ENCODE measurements at regions of chr1 and their contacts with region 1.

Region 1: DNA sequence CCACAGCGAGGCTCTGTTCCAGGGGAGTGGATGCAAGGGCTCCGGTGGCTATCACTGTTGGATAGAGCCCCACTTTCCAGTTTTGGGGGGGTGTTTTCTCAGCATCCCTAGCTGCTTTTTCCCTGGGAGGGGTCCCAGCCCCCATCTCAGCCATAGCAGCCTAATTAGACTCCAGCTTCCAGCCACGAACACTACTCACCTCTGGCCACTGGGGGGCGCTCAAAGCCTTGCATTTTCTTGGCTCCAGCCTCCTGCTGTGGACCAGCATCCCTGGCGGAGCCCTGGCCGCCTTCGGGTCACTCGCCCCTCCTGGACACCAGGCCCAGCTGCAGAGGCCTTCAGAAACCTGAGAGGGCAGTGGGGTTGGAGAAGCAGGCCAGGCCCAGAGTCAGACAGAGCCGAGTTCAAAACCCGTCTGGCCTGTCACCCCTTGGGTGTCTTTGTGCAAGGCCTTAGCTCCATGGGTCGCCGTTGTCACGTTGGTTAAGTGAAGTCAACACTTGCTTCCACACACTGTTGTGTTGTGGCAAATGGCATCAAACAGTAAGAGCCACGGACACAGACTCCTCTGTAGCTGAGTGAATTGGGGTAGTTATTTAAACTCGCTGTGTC is 93.5 kb upstream of the ACTL8 start:
- DNase-seq: peak; percentile 83 to 89 (median 88)
- ATAC-seq: peak; percentile 90
- H3K4me3 ChIP-seq: no peak overlapping the region
- H3K27ac ChIP-seq: no peak overlapping the region
- H3K4me1 ChIP-seq: no peaks in the 10 kb centered on the region
- H3K27me3 ChIP-seq: peaks cover 0 to 22% of the 10 kb centered on the region in 2 experiments; a peak in 1 of 5 replicates
- CTCF ChIP-seq: peak; percentile 93 to 95 (median 94)
- EP300 ChIP-seq: no peak
- POLR2A ChIP-seq: no peak
- RAD21 ChIP-seq: peak; percentile 77 to 90

Region 2: DNA sequence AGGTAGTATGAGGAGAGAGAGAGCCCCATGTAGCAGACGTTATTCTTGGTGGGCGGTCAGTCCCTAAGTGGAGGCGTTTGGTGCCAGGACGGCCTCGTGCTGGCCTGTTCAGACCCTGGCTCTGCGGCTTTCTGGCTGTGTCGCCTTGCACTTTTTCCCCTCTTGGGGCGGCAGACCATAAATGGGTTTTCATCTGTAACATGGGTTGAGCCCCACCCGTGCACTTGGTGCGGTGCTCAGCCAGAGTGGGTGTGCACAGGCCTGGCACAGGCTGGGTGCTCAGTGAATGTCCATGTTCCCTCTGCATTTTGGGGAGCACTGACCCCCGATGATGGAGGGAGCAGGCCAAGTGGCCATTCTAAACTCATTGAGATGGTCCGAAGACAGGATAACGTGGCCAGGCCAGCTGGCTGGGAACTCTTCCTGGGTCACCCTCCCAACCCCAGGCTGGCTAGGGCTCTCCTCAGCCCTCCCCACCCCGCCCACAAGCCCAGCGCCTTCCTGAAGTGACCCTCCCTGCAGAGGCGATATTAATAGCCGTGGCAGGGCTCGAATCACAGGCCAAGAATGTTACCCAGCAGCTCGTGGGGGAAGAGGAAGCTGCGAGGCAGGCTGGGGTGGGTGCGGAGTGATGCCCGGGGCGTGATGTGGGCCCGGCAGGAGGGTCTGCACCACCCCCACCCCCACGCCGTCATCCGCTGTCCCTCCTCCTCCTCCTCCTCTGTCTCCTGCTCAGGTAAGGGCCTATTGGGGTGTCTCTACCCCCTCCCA is 43.7 kb before region 1 on chr1:
- CTCF ChIA-PET with region 1: no interaction called
- POLR2A ChIA-PET with region 1: no interaction called
- in situ Hi-C with region 1: no loop called
- intact Hi-C with region 1: no loop called
- DNase-seq: no peak
- ATAC-seq: no peak
- H3K4me3 ChIP-seq: no peak overlapping the region
- H3K27ac ChIP-seq: no peak overlapping the region
- H3K4me1 ChIP-seq: peaks cover 0 to 3% of the 10 kb centered on the region in 2 experiments; a peak in 2 of 5 replicates
- H3K27me3 ChIP-seq: peaks cover 30 to 93% of the 10 kb centered on the region in 2 experiments; a peak in 4 of 5 replicates
- CTCF ChIP-seq: no peak
- EP300 ChIP-seq: no peak
- POLR2A ChIP-seq: no peak
- RAD21 ChIP-seq: no peak

Region 3: DNA sequence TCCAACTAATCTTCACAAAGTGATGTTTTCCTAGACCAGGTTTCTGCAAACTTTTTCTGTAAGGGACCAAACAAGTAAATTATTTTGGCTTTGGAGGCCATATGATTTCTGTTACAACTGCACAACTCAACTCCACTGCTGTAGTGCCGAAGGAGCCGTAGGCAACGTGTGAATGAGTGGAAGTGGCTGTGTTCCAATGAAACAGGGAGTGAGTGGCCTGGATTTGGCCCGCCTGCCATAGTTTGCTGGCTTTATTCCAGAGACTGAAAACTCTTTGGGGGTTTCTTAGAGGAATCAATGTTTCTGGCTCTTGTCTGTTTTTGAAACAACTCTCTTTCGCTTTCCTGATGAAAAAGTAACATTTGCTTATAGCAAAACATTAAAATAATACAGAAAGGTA is 80.9 kb after region 1 on chr1:
- CTCF ChIA-PET with region 1: interaction called, 4 read pairs
- POLR2A ChIA-PET with region 1: no interaction called
- in situ Hi-C with region 1: no loop called
- intact Hi-C with region 1: loop called (anchors 5 kb)
- DNase-seq: no peak
- ATAC-seq: no peak
- H3K4me3 ChIP-seq: no peak overlapping the region
- H3K27ac ChIP-seq: no peak overlapping the region
- H3K4me1 ChIP-seq: no peaks in the 10 kb centered on the region
- H3K27me3 ChIP-seq: peaks cover 3 to 33% of the 10 kb centered on the region in 2 experiments; a peak in 4 of 5 replicates
- CTCF ChIP-seq: no peak
- EP300 ChIP-seq: no peak
- POLR2A ChIP-seq: no peak
- RAD21 ChIP-seq: no peak

Region 4: GRCh38 chr1:17826165-17826488 is 164.5 kb after region 1 on chr1:
- CTCF ChIA-PET with region 1: interaction called, 6 read pairs
- POLR2A ChIA-PET with region 1: interaction called, 4 read pairs
- in situ Hi-C with region 1: loop called (anchors 10 kb)
- intact Hi-C with region 1: loop called (anchors 5 kb)
- DNase-seq: peak; percentile 61 to 84 (median 78)
- ATAC-seq: peak; percentile 92
- H3K4me3 ChIP-seq: no peak overlapping the region
- H3K27ac ChIP-seq: no peak overlapping the region
- H3K4me1 ChIP-seq: peaks cover 0 to 7% of the 10 kb centered on the region in 2 experiments; a peak in 1 of 5 replicates
- H3K27me3 ChIP-seq: peaks cover 7 to 19% of the 10 kb centered on the region in 2 experiments; a peak in 4 of 5 replicates
- CTCF ChIP-seq: peak; percentile 69 to 81 (median 78)
- EP300 ChIP-seq: no peak
- POLR2A ChIP-seq: no peak
- RAD21 ChIP-seq: peak in 1 of 2 experiments; percentile 60; a peak in 2 of 4 replicates

Region 5: GRCh38 chr1:17922833-17923232 is 261.2 kb after region 1 on chr1:
- CTCF ChIA-PET with region 1: no interaction called
- POLR2A ChIA-PET with region 1: no interaction called
- in situ Hi-C with region 1: no loop called
- intact Hi-C with region 1: loop called (anchors 5 kb)
- DNase-seq: peak; percentile 54 to 63 (median 60)
- ATAC-seq: peak; percentile 68; the same call in 2 of the 3 replicates
- H3K4me3 ChIP-seq: no peak overlapping the region
- H3K27ac ChIP-seq: no peak overlapping the region
- H3K4me1 ChIP-seq: no peaks in the 10 kb centered on the region
- H3K27me3 ChIP-seq: no peaks in the 10 kb centered on the region
- CTCF ChIP-seq: peak; percentile 72 to 88 (median 75)
- EP300 ChIP-seq: no peak
- POLR2A ChIP-seq: no peak
- RAD21 ChIP-seq: peak; percentile 53 to 76

Region 6: GRCh38 chr1:18100491-18101063 is 438.9 kb after region 1 on chr1:
- CTCF ChIA-PET with region 1: no interaction called
- POLR2A ChIA-PET with region 1: no interaction called
- in situ Hi-C with region 1: no loop called
- intact Hi-C with region 1: loop called (anchors 10 kb)
- DNase-seq: peak; percentile 71 to 88 (median 82)
- ATAC-seq: peak; percentile 82
- H3K4me3 ChIP-seq: no peak overlapping the region
- H3K27ac ChIP-seq: no peak overlapping the region
- H3K4me1 ChIP-seq: no peaks in the 10 kb centered on the region
- H3K27me3 ChIP-seq: no peaks in the 10 kb centered on the region; a peak in 1 of 5 replicates
- CTCF ChIP-seq: peak; percentile 65 to 89 (median 83)
- EP300 ChIP-seq: no peak
- POLR2A ChIP-seq: no peak
- RAD21 ChIP-seq: peak; percentile 35 to 74

Region 7: GRCh38 chr1:18299441-18300338 is 638.0 kb after region 1 on chr1:
- CTCF ChIA-PET with region 1: no interaction called
- POLR2A ChIA-PET with region 1: no interaction called
- in situ Hi-C with region 1: no loop called
- intact Hi-C with region 1: loop called (anchors 5 kb)
- DNase-seq: peak; percentile 47 to 80 (median 76)
- ATAC-seq: peak; percentile 83
- H3K4me3 ChIP-seq: no peak overlapping the region
- H3K27ac ChIP-seq: no peak overlapping the region
- H3K4me1 ChIP-seq: no peaks in the 10 kb centered on the region
- H3K27me3 ChIP-seq: peaks cover 0 to 9% of the 10 kb centered on the region in 2 experiments; a peak in 1 of 5 replicates
- CTCF ChIP-seq: peak; percentile 76 to 88 (median 86)
- EP300 ChIP-seq: no peak
- POLR2A ChIP-seq: no peak
- RAD21 ChIP-seq: peak; percentile 35 to 66

Region 8: GRCh38 chr1:18575620-18576019 is 914.0 kb after region 1 on chr1:
- CTCF ChIA-PET with region 1: no interaction called
- POLR2A ChIA-PET with region 1: no interaction called
- in situ Hi-C with region 1: loop called (anchors 10 kb)
- intact Hi-C with region 1: loop called (anchors 5 kb)
- DNase-seq: peak; percentile 78 to 81 (median 80)
- ATAC-seq: peak; percentile 89
- H3K4me3 ChIP-seq: no peak overlapping the region
- H3K27ac ChIP-seq: no peak overlapping the region
- H3K4me1 ChIP-seq: no peaks in the 10 kb centered on the region; a peak in 1 of 5 replicates
- H3K27me3 ChIP-seq: peaks cover 5 to 21% of the 10 kb centered on the region in 2 experiments; a peak in 3 of 5 replicates
- CTCF ChIP-seq: peak; percentile 89 to 93 (median 90)
- EP300 ChIP-seq: no peak
- POLR2A ChIP-seq: no peak
- RAD21 ChIP-seq: peak; percentile 88 to 92

Measured in K562 (cell line).